ENCODE measurements at regions of chr2 and their contacts with region 1.

Region 1: DNA sequence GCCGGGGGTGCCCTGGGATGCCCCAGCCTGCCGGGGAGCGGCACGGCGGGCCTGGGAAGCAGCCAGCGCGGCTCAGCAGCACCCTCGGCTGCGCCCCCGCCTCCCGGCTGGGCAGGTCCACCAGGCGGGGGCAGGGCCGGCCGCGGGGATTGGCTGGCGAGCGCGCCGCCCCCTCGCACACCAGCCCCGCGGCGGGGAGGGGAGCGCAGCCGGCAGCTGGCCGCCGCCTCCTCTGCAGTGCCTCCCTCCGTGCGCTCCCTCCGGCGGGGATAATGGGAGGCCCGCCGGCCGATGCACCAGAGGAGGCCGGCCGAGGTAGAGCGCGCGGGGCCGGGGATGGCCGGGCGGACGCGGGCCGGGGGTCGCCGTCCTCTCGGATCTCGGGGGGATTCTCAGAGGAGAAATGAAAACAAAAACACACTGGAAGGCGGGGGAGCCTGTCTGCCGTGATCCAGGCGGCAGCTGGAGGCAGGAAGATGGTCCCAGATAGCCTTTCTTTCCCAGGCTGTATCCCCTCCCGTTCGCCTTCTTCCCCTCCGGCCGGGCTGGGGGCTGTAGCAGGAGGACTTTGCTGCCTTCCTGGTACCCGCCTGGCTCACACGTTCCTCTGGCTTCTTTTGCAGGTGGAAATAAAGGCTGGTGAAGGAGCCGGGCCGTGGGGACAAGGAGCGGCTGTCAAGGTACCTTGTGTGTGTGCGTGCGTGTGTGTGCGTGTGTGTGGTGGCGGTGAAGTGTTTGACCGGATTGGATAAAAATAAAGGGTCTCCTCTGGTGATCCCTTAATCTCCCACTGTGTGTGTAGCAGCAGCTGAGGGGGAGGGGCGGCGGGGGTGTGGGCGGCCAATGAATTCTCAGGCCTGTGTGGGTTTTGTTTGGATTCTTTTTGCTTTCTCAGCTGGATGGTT is 18.0 kb downstream of the TET3 start:
- DNase-seq: peak; percentile 86 to 90
- ATAC-seq: peak; percentile 95 to 99 (median 95)
- H3K4me3 ChIP-seq: peak overlapping the region; percentile 66
- H3K4me3 Mint-ChIP-seq: peak overlapping the region; percentile 89
- H3K27ac ChIP-seq: peak overlapping the region; percentile 41
- H3K27ac Mint-ChIP-seq: peak overlapping the region; percentile 71 to 92
- H3K4me1 ChIP-seq: peaks cover 34% of the 10 kb centered on the region
- H3K4me1 Mint-ChIP-seq: peaks cover 76 to 85% of the 10 kb centered on the region in 2 donors
- H3K27me3 ChIP-seq: no peaks in the 10 kb centered on the region
- H3K27me3 Mint-ChIP-seq: no peaks in the 10 kb centered on the region
- CTCF ChIP-seq: no peak

Region 2: DNA sequence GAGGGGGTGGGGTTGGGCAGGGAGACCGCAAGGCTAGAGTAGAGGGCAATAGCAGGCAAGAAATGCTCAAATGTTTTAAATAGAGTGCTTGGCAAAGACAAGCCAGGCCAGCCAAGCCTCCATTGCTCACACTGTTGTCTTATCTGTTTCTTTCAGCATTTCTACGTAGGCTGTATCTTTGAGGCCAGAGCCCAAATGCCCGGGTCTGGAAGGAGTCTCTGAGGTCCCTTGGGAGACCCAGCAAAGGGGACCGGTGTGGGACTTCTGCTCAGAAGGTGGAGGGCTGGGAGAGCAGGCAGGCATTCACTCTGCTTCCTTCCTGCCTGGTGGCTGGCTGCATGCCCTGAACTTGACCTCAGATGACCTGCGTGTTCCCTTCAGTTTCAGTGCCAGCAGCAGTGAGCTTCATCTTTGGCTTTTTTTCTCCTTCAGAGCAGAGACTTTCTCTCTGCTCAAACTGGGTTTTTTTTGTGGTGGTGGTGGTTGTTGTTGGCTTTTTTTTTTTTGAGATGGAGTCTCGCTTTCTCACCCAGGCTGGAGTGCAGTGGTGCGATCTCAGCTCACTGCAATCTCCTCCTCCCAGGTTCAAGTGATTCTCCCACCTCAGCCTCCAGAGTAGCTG is 31.8 kb before region 1 on chr2:
- intact Hi-C with region 1: loop called (anchors 1 kb)
- DNase-seq: peak; percentile 49 to 88
- ATAC-seq: peak; percentile 88 to 92 (median 90)
- H3K4me3 ChIP-seq: no peak overlapping the region
- H3K4me3 Mint-ChIP-seq: peak overlapping the region; percentile 86
- H3K27ac ChIP-seq: peak overlapping the region; percentile 73
- H3K27ac Mint-ChIP-seq: peak overlapping the region; percentile 90
- H3K4me1 ChIP-seq: peaks cover 37% of the 10 kb centered on the region
- H3K4me1 Mint-ChIP-seq: peaks cover 27 to 37% of the 10 kb centered on the region in 2 donors
- H3K27me3 ChIP-seq: no peaks in the 10 kb centered on the region
- H3K27me3 Mint-ChIP-seq: no peaks in the 10 kb centered on the region
- CTCF ChIP-seq: no peak

Region 3: GRCh38 chr2:73985308-73986084 is 17.2 kb before region 1 on chr2:
- intact Hi-C with region 1: loop called (anchors 2 kb)
- DNase-seq: peak; percentile 54 to 79
- ATAC-seq: peak; percentile 52 to 60 (median 54)
- H3K4me3 ChIP-seq: peak overlapping the region; percentile 63
- H3K4me3 Mint-ChIP-seq: peak overlapping the region; percentile 89
- H3K27ac ChIP-seq: peak overlapping the region; percentile 69
- H3K27ac Mint-ChIP-seq: peak overlapping the region; percentile 34 to 84
- H3K4me1 ChIP-seq: peaks cover 58% of the 10 kb centered on the region
- H3K4me1 Mint-ChIP-seq: peaks cover 62 to 71% of the 10 kb centered on the region in 2 donors
- H3K27me3 ChIP-seq: peaks cover 1% of the 10 kb centered on the region
- H3K27me3 Mint-ChIP-seq: peaks cover 19 to 20% of the 10 kb centered on the region in 2 donors
- CTCF ChIP-seq: no peak

Region 4: DNA sequence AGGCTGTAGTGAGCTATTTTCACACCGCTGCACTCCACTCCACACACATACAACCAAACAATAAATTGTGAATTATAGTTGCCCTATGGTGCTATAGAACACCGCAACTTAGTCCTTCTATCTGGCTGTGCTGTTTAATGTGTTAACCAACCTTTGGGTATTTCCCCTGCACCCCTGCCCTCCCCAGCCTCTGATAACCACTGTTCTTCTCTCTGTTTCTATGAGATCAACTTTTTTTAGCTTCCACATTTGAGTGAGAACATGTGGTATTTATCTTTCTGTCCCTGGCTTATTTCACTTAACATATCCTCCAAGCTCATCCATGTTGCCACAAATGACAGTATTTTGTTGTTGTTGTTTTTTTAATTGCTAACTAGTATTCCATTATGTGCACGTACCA is 14.5 kb after region 1 on chr2:
- intact Hi-C with region 1: loop called (anchors 1 kb)
- DNase-seq: peak in 1 of 2 donors; percentile 37
- ATAC-seq: peak; percentile 88 to 100 (median 97)
- H3K4me3 ChIP-seq: no peak overlapping the region
- H3K4me3 Mint-ChIP-seq: peak overlapping the region; percentile 19
- H3K27ac ChIP-seq: no peak overlapping the region
- H3K27ac Mint-ChIP-seq: peak overlapping the region; percentile 37 to 68
- H3K4me1 ChIP-seq: peaks cover 28% of the 10 kb centered on the region
- H3K4me1 Mint-ChIP-seq: peaks cover 46 to 49% of the 10 kb centered on the region in 2 donors
- H3K27me3 ChIP-seq: no peaks in the 10 kb centered on the region
- H3K27me3 Mint-ChIP-seq: no peaks in the 10 kb centered on the region
- CTCF ChIP-seq: no peak

Region 5: DNA sequence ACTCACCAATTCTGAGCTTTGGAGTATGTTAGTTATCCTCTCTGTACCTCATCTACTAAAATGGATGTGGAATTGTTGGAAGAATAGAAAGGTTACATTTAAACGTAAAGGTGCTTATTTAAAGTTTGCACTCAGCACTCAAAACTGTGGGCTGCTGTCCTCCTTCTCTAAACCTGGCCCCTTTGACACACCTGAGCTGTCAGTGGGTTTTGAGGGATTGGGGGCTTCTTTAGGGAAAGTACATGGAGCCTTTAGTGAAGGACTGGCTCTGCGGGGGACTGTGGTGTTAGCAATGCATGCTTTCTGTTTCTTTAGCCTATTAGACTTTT is 29.2 kb after region 1 on chr2:
- intact Hi-C with region 1: loop called (anchors 1 kb)
- DNase-seq: no peak
- ATAC-seq: no peak
- H3K4me3 ChIP-seq: peak overlapping the region; percentile 6
- H3K4me3 Mint-ChIP-seq: peak overlapping the region; percentile 92
- H3K27ac ChIP-seq: peak overlapping the region; percentile 96
- H3K27ac Mint-ChIP-seq: peak overlapping the region; percentile 96 to 98
- H3K4me1 ChIP-seq: peaks cover 51% of the 10 kb centered on the region
- H3K4me1 Mint-ChIP-seq: peaks cover 79 to 80% of the 10 kb centered on the region in 2 donors
- H3K27me3 ChIP-seq: no peaks in the 10 kb centered on the region
- H3K27me3 Mint-ChIP-seq: no peaks in the 10 kb centered on the region
- CTCF ChIP-seq: no peak

Region 6: GRCh38 chr2:74092275-74092674 is 89.5 kb after region 1 on chr2:
- intact Hi-C with region 1: loop called (anchors 10 kb)
- DNase-seq: no peak
- ATAC-seq: no peak
- H3K4me3 ChIP-seq: no peak overlapping the region
- H3K4me3 Mint-ChIP-seq: no peak overlapping the region
- H3K27ac ChIP-seq: no peak overlapping the region
- H3K27ac Mint-ChIP-seq: no peak overlapping the region
- H3K4me1 ChIP-seq: peaks cover 14% of the 10 kb centered on the region
- H3K4me1 Mint-ChIP-seq: peaks cover 23 to 31% of the 10 kb centered on the region in 2 donors
- H3K27me3 ChIP-seq: no peaks in the 10 kb centered on the region
- H3K27me3 Mint-ChIP-seq: no peaks in the 10 kb centered on the region
- CTCF ChIP-seq: no peak

Region 7: DNA sequence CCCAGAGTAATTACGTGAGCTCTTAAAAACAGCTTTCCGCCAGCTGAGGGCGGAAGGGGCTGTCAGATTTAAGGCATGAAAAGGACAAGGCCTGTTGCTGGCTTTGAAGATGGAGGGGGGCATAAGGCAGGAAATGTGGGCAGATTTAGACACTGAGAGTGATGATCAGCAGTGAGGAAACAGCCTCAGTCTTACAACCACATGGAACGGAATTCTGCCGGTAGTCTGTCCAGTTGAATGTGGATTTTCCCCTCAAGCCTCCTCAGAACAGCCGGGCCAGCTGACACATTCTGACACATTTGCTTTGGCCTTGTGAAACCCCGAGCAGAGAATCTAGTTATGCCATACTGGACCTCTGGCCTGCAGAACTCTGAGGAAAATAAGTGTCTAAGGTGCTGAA is 972.3 kb after region 1 on chr2:
- intact Hi-C with region 1: no loop called
- DNase-seq: no peak
- ATAC-seq: no peak
- H3K4me3 ChIP-seq: no peak overlapping the region
- H3K4me3 Mint-ChIP-seq: no peak overlapping the region
- H3K27ac ChIP-seq: no peak overlapping the region
- H3K27ac Mint-ChIP-seq: no peak overlapping the region
- H3K4me1 ChIP-seq: no peaks in the 10 kb centered on the region
- H3K4me1 Mint-ChIP-seq: no peaks in the 10 kb centered on the region
- H3K27me3 ChIP-seq: no peaks in the 10 kb centered on the region
- H3K27me3 Mint-ChIP-seq: no peaks in the 10 kb centered on the region
- CTCF ChIP-seq: no peak